Heart left ventricle (tissue), 16 donors: ENCODE measurements at regions of chr4 and their contacts with region 1.

Region 1: GRCh38 chr4:87093443-87094123 is 126.8 kb downstream of the KLHL8 start:
- DNase-seq: peak in 1 of 5 donors; percentile 37
- ATAC-seq: peak; percentile 65 to 84 (median 78)
- H3K4me3 ChIP-seq: no peak overlapping the region
- H3K27ac ChIP-seq: peak overlapping the region in 6 of 12 donors; percentile 2 to 43 (median 15)
- H3K4me1 ChIP-seq: peaks cover 0 to 52% (median 27%) of the 10 kb centered on the region in 12 donors
- H3K27me3 ChIP-seq: no peaks in the 10 kb centered on the region
- CTCF ChIP-seq: peak; percentile 48 to 84 (median 71)
- POLR2A ChIP-seq: no peak

Region 2: GRCh38 chr4:86921608-86922252 is 171.9 kb before region 1 on chr4:
- intact Hi-C with region 1: loop called in 9 of 10 experiments (anchors 1 to 5 kb)
- DNase-seq: no peak
- ATAC-seq: no peak
- H3K4me3 ChIP-seq: no peak overlapping the region
- H3K27ac ChIP-seq: no peak overlapping the region
- H3K4me1 ChIP-seq: peaks cover 0 to 46% (median 0%) of the 10 kb centered on the region in 12 donors
- H3K27me3 ChIP-seq: no peaks in the 10 kb centered on the region
- CTCF ChIP-seq: no peak
- POLR2A ChIP-seq: no peak

Region 3: GRCh38 chr4:86927843-86928395 is 165.7 kb before region 1 on chr4:
- intact Hi-C with region 1: loop called in 5 of 10 experiments (anchors 2 to 5 kb)
- DNase-seq: peak in 1 of 5 donors; percentile 38
- ATAC-seq: peak in 3 of 4 donors; percentile 63 to 87 (median 73)
- H3K4me3 ChIP-seq: no peak overlapping the region
- H3K27ac ChIP-seq: peak overlapping the region in 3 of 12 donors; percentile 34 to 63 (median 55)
- H3K4me1 ChIP-seq: peaks cover 0 to 33% (median 0%) of the 10 kb centered on the region in 12 donors
- H3K27me3 ChIP-seq: no peaks in the 10 kb centered on the region
- CTCF ChIP-seq: no peak
- POLR2A ChIP-seq: no peak

Region 4: DNA sequence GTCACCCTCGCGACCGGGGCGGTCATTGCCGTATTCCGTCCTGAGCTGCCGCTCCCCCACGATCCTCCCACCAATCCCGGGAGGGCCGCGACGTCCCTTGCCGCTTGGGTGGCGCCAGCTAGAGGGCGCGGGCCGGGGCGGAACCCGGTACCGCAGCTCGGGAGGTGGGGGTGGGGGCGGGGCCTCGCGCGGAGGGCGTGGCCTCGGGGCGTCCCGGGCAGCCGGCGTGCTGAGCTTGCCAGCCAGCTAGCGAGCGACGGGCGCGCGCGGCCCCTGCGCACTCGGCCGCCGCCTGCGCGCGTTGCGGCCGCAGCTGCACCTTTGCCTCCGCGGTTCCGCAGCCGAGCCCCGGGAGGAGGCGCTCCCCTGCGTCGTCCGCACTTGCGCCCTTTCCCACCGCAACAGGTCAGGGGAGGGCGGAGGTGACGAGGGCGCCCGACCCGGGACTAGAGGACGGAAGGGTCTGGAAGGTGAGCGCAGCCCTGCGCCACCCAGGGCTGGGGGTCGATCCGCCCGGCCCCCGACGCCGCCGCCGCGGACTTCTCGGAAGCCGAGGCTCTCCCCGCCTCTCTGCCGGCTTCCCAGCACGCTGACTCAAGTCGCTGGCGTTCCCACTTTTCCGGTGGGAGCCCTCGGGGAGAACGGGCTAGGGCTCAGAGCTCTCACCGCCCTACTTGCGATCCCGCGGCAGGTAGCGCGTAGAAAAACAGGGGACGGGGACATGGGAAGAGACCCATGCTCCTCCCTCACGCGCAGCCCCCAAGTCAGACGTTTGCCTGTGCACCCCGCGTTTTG is 158.6 kb before region 1 on chr4 and contains the start of gene AFF1:
- intact Hi-C with region 1: loop called in 2 of 10 experiments (anchors 2 to 5 kb)
- DNase-seq: peak; percentile 94 to 97 (median 96)
- ATAC-seq: peak; percentile 94 to 97 (median 94)
- H3K4me3 ChIP-seq: peak within 1 kb of the TSS; percentile 58 to 98 (median 94)
- H3K27ac ChIP-seq: peak within 1 kb of the TSS; percentile 87 to 100 (median 98)
- H3K4me1 ChIP-seq: peaks cover 6 to 49% (median 36%) of the 10 kb centered on the region in 12 donors
- H3K27me3 ChIP-seq: no peaks in the 10 kb centered on the region
- CTCF ChIP-seq: peak; percentile 29 to 83 (median 52)
- POLR2A ChIP-seq: peak; percentile 73 to 95
- total RNA-seq, gene AFF1: 55.8 to 96.5 (median 73.3) TPM

Region 5: DNA sequence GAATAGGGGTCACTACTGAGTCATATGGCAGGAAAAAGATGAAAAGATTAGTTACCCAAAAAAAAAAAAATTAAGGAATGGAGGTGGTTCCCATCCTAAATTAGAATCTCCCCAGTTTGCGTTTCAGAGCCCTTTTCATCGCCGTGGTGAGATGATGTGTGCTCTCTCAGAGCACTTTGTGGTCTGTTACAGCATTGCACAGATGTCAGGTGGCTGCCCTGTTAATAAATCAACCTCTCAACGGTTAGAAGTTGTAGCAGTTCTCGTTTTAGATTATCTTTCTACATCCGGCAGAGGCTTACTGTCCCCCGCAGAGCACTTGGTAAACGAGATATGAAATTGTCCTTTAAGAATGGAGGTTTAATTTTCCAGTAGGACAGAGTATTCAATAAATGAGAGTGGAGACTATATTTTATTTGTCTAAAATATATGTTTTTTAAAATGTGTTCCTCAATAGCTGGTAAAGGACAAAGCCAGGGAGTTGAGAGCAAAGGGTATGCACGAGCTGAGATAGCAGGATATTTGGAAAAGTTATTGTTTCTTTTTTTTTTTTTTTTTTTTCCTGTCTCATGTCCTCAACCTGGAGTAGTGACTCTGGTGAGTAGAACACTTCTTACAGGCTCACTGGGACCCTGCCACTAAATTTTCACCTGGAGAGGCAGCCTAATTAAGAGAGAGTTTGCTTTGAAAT is 131.8 kb before region 1 on chr4:
- intact Hi-C with region 1: no loop called
- DNase-seq: no peak
- ATAC-seq: peak in 3 of 4 donors; percentile 63 to 73 (median 70)
- H3K4me3 ChIP-seq: no peak overlapping the region
- H3K27ac ChIP-seq: peak overlapping the region in 5 of 12 donors; percentile 25 to 69 (median 37)
- H3K4me1 ChIP-seq: peaks cover 0 to 70% (median 25%) of the 10 kb centered on the region in 12 donors
- H3K27me3 ChIP-seq: no peaks in the 10 kb centered on the region
- CTCF ChIP-seq: no peak
- POLR2A ChIP-seq: no peak